ENCODE measurements at regions of chr4 and their contacts with region 1.

Region 1: DNA sequence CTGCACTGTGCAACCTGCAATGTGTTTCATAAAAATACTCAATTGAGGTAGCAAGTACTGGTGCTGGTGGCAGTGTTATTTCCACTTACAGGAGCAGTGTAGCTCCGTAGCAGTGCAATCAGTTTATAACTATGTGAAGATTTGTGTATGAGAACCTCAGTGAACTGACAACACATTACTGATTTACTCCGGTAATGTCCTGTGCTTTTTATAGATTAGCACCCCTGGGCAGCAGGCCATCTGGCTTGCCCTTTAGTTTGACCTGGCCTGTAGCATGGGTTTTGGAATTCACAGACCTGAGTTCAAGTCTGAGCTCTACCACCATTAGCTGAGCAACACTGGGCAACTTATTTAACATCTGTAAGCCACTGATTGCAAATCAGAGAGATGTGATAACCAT is 78.6 kb upstream of the GBA3 start:
- DNase-seq: no peak
- ATAC-seq: no peak
- H3K4me3 ChIP-seq: no peak overlapping the region
- H3K27ac ChIP-seq: no peak overlapping the region
- H3K4me1 ChIP-seq: peaks cover 4% of the 10 kb centered on the region
- H3K27me3 ChIP-seq: no peaks in the 10 kb centered on the region
- CTCF ChIP-seq: no peak
- POLR2A ChIP-seq: no peak

Region 2: GRCh38 chr4:22338796-22339195 is 275.3 kb before region 1 on chr4:
- intact Hi-C with region 1: no loop called
- DNase-seq: peak in 1 of 4 donors; percentile 38
- ATAC-seq: no peak
- H3K4me3 ChIP-seq: no peak overlapping the region
- H3K27ac ChIP-seq: no peak overlapping the region
- H3K4me1 ChIP-seq: no peaks in the 10 kb centered on the region
- H3K27me3 ChIP-seq: no peaks in the 10 kb centered on the region
- CTCF ChIP-seq: no peak
- POLR2A ChIP-seq: no peak

Region 3: DNA sequence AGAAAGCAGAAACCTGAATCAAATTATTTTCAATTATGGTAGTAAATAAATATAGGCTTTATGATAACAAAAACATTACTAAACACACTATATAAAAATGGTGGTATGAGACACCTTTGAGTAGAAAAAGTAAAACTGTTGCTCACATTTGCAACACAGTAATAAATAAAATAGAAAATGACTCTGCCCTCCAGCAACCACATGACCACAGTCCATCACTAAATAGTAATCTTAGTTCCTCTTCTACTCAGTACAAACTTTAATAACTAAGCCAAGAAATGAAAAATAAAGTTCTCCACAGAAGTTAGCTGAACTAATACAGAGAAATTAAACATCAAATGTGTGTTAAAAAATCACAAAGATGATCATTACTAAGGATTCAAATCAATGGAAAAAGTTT is 206.8 kb before region 1 on chr4:
- intact Hi-C with region 1: loop called (anchors 5 kb)
- DNase-seq: no peak
- ATAC-seq: no peak
- H3K4me3 ChIP-seq: no peak overlapping the region
- H3K27ac ChIP-seq: no peak overlapping the region
- H3K4me1 ChIP-seq: no peaks in the 10 kb centered on the region
- H3K27me3 ChIP-seq: no peaks in the 10 kb centered on the region
- CTCF ChIP-seq: no peak
- POLR2A ChIP-seq: no peak